Activated CD8-positive, alpha-beta T cell treated with anti-CD3 and anti-CD28 coated beads, Interleukin-2, amount 10 ng/mL, durations not matched to agents 7 days and 5 days (primary cell): ENCODE measurements at regions of chr9 and their contacts with region 1.

Region 1: DNA sequence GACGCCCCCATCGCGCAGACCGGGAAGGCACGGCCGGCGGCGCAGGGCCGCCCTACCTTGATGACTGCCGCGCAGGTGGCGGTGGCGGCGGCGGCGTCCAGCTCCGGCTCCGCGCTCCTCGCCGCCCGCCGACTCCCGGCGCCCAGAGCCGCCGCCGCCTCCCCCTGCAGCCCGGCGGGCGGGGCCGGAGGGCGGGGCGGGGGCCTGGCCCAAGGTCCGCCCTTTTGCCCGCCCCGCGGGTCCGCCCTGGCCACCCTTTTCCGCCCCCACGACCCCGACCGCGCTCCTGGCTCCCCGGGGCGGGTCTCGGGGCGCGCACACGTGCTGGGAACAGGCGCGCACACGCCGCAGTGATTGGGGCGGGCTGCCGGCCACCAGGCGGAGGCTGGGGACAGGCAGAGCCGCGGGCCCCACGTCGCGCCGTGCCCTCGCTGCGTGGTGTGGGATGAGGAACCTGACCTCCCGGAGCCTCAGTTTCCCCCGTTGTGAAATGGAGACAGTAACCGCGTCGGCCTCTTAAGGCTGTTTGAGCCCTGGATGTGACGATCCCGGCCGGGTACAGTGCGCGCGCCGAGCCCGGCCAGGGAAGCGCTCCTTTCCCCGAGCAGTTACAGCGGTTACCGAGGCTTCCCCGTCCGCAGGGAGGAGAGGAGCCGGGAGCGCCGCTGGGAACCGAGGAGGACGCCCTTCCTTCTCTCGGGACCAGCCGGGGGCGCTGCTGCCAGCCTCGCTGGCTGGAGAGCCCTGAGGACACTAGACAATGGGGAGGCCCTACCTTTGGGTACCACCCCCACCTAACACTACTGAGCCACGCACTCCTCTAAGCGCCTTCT is at the start of gene CORO2A:
- DNase-seq: peak; percentile 76
- ATAC-seq: peak; percentile 89
- H3K4me3 Mint-ChIP-seq: peak within 1 kb of the TSS; percentile 82
- H3K27ac Mint-ChIP-seq: peak within 1 kb of the TSS; percentile 55
- H3K4me1 Mint-ChIP-seq: peaks cover 30% of the 10 kb centered on the region
- H3K27me3 Mint-ChIP-seq: no peaks in the 10 kb centered on the region
- total RNA-seq, gene CORO2A: 9.2 TPM

Region 2: DNA sequence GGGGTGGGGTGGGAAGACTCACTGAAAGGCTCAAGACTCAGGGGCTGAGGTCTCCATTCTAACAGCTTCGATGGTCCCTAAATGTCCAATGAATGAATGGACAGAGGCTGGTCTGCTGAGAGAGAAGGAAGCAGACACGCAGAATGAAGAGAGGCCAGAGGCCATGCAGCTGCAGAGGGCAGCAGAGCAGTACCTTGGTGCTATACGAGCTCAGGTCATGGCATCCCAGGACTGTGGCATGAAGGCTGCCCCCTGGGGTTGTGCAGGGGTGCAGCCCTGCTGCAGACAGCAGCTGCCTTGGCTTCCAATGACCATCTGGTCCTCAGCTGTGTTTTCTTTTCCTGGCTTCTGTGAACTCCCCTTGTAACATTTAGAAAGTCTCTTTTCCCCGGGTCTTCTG is 14.9 kb after region 1 on chr9:
- CTCF ChIA-PET with region 1: interaction called, 40 read pairs
- POLR2A ChIA-PET with region 1: no interaction called
- DNase-seq: no peak
- ATAC-seq: no peak
- H3K4me3 Mint-ChIP-seq: no peak overlapping the region
- H3K27ac Mint-ChIP-seq: no peak overlapping the region
- H3K4me1 Mint-ChIP-seq: peaks cover 2% of the 10 kb centered on the region
- H3K27me3 Mint-ChIP-seq: no peaks in the 10 kb centered on the region